Colonic mucosa (tissue), 4 donors: ENCODE measurements at regions of chr1 and their contacts with region 1.

Region 1: DNA sequence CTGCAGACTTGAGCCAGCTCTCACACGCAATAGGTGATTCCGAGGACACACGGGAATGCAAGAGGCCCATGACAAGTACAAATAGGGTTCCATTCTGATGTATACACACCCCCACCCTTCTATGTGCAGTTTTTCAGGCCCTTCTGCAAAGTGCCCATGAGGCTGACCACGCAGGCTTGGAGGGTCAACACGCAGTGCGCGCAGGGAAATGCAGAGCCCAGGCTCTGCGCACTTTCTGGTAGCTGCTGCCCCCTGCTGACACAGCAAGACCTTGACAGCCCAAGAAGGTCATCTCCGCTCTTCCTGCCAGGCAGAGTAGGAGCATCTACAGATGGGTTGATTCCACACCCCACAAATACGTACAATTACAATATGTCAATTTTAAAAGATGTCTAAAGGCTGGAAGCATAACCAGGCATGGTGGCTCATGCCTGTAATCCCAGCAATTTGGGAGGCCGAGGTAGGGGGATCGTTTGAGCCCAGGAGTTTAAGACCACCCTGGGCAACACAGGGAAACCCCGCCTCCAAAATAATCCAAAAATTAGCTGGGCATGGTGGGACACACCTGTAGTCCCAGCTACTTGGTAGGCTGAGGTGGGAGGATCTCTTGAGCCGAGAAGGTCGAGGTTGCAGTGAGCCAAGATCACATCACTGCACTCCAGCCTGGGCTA is 18.5 kb downstream of the SH3BP5L start:
- DNase-seq: peak; percentile 75
- H3K4me3 ChIP-seq: no peak overlapping the region
- H3K27ac ChIP-seq: no peak overlapping the region
- H3K4me1 ChIP-seq: peaks cover 10% of the 10 kb centered on the region
- H3K27me3 ChIP-seq: no peaks in the 10 kb centered on the region
- CTCF ChIP-seq: peak; percentile 67

Region 2: GRCh38 chr1:248622570-248623001 is 184.6 kb before region 1 on chr1:
- intact Hi-C with region 1: loop called (anchors 2 kb)
- DNase-seq: no peak
- H3K4me3 ChIP-seq: no peak overlapping the region
- H3K27ac ChIP-seq: no peak overlapping the region
- H3K4me1 ChIP-seq: no peaks in the 10 kb centered on the region
- H3K27me3 ChIP-seq: no peaks in the 10 kb centered on the region
- CTCF ChIP-seq: peak; percentile 50

Region 3: DNA sequence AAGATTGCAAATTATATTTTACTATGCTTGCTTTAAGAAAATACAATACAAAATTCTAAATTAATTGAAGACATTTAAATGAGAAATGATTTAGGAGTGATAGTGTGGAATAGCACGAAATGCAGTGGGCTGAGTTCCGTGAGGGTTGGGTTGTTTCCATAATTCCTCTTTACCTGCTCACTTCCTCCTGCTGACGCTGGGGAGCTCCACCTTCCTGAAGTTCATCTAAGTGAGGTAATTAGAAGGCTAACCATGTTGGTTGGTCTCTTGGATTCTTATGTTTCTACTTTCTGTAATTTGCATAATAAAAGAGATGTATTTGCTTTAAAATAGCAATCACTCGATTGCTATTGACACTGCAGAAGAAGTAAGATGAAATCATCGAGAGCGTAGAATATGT is 109.3 kb before region 1 on chr1:
- intact Hi-C with region 1: loop called (anchors 2 kb)
- DNase-seq: no peak
- H3K4me3 ChIP-seq: no peak overlapping the region
- H3K27ac ChIP-seq: no peak overlapping the region
- H3K4me1 ChIP-seq: no peaks in the 10 kb centered on the region
- H3K27me3 ChIP-seq: no peaks in the 10 kb centered on the region
- CTCF ChIP-seq: peak; percentile 28

Region 4: DNA sequence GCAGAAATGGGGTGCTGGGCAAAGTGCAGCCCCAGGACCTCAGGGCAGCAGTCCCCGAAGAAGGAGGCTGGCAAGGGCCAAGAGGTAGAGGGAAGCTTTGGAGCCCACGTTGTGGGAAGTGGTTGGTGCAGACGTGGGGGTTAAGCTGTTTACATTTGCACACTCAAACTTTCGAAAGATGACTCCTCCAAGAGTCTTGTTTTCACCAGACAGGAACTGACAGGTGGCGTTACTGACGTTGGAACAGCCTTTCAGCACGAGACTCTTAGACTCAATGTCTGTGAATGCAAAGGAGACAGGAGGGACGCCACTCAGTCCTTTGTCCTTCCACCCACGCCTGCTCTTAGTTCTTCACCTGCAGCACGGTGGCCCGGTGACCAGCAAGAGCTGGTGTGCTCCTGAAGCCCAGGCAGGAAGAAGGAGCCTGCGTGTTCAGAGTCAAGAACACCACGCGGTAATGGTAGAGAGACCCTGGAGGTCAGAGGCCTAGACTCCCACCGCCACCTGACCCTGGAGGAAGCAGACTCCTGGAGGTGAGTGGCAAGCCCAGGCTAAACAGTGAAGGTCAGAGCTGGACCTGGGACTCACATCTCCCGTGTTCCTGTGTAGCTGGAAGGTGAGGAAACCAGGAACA is 67.5 kb before region 1 on chr1:
- intact Hi-C with region 1: no loop called
- DNase-seq: no peak
- H3K4me3 ChIP-seq: no peak overlapping the region
- H3K27ac ChIP-seq: no peak overlapping the region
- H3K4me1 ChIP-seq: no peaks in the 10 kb centered on the region
- H3K27me3 ChIP-seq: no peaks in the 10 kb centered on the region
- CTCF ChIP-seq: no peak